Prostate gland (tissue), 2 donors: ENCODE measurements at regions of chr6 and their contacts with region 1.

Region 1: DNA sequence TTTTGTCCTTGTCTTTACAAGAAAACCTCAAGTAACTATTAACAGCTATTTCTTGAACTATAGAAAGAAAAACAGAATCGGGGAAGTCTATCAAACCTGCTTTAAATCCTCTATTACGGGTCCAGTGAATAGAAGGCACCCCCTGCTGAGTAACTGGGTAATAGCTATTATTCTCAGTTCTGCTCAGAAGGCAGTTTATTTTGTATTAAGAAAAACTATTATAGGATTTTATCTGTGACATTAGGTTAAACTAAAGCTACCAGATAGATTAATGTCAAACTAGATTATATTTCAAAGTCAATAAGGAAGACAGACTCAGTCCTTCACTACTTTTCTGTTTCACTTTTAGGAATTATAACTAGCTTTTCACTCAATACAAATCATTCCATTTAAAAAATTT is 93.7 kb downstream of the DST start:
- DNase-seq: no peak
- H3K4me3 ChIP-seq: no peak overlapping the region
- H3K27ac ChIP-seq: peak overlapping the region in 1 of 2 donors; percentile 38
- H3K4me1 ChIP-seq: no peaks in the 10 kb centered on the region
- H3K27me3 ChIP-seq: no peaks in the 10 kb centered on the region
- CTCF ChIP-seq: peak in 3 of 4 experiments; percentile 24 to 60 (median 49)
- POLR2A ChIP-seq: no peak

Region 2: GRCh38 chr6:56510984-56511531 is 38.0 kb before region 1 on chr6:
- intact Hi-C with region 1: no loop called
- DNase-seq: no peak
- H3K4me3 ChIP-seq: no peak overlapping the region
- H3K27ac ChIP-seq: no peak overlapping the region
- H3K4me1 ChIP-seq: no peaks in the 10 kb centered on the region
- H3K27me3 ChIP-seq: no peaks in the 10 kb centered on the region
- CTCF ChIP-seq: no peak
- POLR2A ChIP-seq: no peak

Region 3: DNA sequence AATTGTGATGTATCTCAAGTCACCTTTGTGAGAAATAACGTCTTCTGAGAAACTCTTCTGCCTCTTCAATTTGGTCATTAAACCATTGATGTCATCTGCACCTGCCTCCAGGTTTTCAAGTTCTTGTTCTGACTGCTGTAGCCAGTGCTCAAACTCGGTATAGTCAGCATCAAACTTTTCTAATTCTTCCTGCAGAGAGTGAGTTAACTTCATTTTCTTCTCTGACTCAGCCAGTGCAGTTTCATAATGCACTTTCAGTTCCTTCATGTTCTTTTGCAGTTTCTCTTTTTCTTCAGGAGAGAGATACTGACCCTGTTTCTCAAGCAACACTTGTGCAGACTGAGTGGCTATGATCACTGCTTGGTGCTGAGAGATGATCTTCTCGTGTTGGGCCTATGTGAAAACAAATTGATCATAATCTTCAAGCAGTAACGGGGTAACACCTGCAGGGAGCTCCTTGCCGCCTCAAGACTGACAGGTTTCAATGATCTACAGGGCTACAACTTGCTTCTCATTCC is 44.8 kb after region 1 on chr6:
- intact Hi-C with region 1: loop called (anchors 5 kb)
- DNase-seq: no peak
- H3K4me3 ChIP-seq: no peak overlapping the region
- H3K27ac ChIP-seq: no peak overlapping the region
- H3K4me1 ChIP-seq: no peaks in the 10 kb centered on the region
- H3K27me3 ChIP-seq: no peaks in the 10 kb centered on the region
- CTCF ChIP-seq: no peak
- POLR2A ChIP-seq: no peak